Motor neuron (in vitro differentiated cells): ENCODE measurements at regions of chr10 and their contacts with region 1.

Region 1: GRCh38 chr10:49164559-49165188 is 23.5 kb downstream of the TMEM273 start:
- ATAC-seq: peak in 6 of 8 experiments; percentile 22 to 86 (median 58)
- H3K4me3 ChIP-seq: no peak overlapping the region
- H3K27ac ChIP-seq: no peak overlapping the region
- H3K4me1 ChIP-seq: no peaks in the 10 kb centered on the region

Region 2: GRCh38 chr10:48885383-48885782 is 279.3 kb before region 1 on chr10:
- in situ Hi-C with region 1: loop called in 1 of 9 experiments (anchors 25 kb)
- ATAC-seq: peak in 7 of 8 experiments; percentile 26 to 63 (median 44)
- H3K4me3 ChIP-seq: no peak overlapping the region
- H3K27ac ChIP-seq: no peak overlapping the region
- H3K4me1 ChIP-seq: no peaks in the 10 kb centered on the region

Region 3: DNA sequence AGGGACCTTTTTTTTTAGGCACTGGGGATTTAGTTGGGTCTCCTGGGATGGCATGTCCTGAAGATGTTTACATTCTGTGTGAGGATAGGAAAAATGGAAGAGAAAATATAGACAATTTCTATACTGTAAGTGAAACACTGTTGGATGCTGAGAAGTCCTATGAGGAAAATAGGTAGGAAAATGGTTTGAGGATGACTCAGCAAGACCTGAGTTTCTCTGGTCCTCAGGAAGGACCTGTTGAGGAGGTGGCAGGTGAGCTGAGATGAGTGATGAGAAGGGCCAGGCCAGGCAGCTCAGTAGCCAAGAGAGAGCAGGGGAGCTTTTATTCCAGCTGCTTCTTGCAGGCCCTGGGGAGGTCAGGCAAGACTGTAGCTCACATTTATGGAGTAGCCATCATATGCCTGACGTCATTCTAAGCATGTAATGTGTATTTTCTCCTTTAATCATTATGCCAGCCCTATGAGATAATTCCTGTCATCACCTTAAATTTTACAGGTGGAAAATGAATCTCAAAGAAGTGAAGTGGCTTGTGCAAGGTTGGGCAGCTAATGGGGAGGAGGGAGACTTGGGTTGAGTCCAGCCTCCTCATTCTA is 206.0 kb before region 1 on chr10:
- in situ Hi-C with region 1: no loop called
- ATAC-seq: peak in 5 of 8 experiments; percentile 91 to 98 (median 93)
- H3K4me3 ChIP-seq: no peak overlapping the region
- H3K27ac ChIP-seq: peak overlapping the region in 1 of 2 donors; percentile 46
- H3K4me1 ChIP-seq: peaks cover 0 to 11% of the 10 kb centered on the region in 2 donors

Region 4: DNA sequence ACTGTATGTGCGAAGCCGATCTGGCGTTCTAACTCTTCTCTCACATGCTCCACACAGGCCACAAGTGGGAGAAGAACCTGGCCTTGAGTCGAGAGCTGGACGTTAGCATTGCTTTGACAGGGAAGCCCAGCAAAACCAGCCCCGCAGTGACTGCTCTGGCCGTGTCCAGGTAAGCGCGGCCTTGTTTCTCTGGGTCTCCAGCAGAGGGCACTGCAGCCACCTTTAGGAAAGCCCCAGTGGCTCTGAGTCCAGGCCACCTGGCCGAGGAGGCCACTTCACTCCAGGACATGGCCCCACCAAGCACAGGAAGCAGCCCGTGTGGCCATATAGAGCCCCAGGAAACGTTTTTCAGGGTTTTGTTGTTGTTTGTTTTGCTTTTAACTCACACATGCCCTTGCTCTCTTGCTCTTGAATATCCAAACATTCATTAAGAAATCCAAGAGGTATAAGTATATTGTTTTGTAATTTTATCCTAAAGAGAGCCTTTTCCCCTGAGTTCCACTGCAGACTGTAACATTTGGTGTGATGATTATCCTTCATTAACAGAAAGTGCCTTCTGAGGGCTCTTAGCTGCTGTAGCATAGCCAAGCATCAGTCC is 183.3 kb before region 1 on chr10:
- in situ Hi-C with region 1: loop called in 1 of 9 experiments (anchors 25 kb)
- ATAC-seq: peak; percentile 50 to 98 (median 82)
- H3K4me3 ChIP-seq: no peak overlapping the region
- H3K27ac ChIP-seq: no peak overlapping the region
- H3K4me1 ChIP-seq: peaks cover 12 to 22% of the 10 kb centered on the region in 2 donors

Region 5: DNA sequence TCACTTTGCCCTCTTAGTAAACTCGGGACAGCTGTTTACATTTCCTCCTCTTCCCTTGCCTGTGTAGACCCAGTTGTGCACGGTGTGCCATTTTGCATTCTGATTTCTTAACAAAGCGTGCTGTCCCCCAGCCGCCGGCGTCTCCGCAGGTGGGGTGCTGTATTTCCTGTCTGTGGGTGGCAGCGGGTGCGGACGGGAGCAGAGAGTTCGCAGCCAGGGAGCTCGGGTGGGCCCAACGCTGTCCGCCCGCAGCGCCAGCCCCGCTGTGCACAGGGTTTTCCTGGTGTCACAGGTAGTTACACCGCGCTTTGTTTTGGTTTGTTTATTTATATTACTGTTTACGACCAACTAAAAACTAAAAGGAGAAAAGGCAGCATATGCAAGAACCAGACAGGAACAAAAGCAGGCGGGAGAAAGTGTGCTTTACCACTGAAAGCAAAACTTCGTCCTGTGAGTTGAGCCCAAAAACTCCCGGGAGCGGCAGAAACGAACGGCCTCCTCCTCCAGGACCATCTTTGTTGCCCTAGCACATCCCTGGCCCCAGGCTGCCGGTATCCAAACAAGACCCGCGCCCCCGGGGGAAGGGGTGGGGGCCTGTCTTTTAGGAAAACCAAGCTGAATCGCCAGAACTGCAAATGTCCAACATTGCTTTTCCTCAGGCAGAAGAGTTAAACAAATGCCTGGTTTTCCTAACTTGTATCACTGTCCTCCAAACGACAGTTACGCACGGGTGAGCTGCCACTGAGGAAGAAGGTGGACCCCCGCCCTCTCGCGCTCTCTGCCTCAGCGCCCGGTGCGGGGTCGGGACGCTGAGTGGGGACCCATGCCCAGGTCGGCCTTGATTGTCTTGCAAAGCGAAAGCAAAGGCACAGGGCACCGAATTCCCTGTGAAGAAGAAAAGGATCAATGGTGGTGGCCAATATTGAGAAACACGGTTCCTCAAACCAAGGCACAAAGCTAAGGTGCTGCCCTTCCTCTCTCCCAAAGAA is 277.1 kb after region 1 on chr10:
- in situ Hi-C with region 1: no loop called
- ATAC-seq: no peak
- H3K4me3 ChIP-seq: no peak overlapping the region
- H3K27ac ChIP-seq: no peak overlapping the region
- H3K4me1 ChIP-seq: no peaks in the 10 kb centered on the region